Activated CD4-positive, alpha-beta T cell treated with anti-CD3 and anti-CD28 coated beads, Interleukin-2, amount 10 ng/mL, durations not matched to agents 24 days and 14 days (primary cell): ENCODE measurements at regions of chr9 and their contacts with region 1.

Region 1: DNA sequence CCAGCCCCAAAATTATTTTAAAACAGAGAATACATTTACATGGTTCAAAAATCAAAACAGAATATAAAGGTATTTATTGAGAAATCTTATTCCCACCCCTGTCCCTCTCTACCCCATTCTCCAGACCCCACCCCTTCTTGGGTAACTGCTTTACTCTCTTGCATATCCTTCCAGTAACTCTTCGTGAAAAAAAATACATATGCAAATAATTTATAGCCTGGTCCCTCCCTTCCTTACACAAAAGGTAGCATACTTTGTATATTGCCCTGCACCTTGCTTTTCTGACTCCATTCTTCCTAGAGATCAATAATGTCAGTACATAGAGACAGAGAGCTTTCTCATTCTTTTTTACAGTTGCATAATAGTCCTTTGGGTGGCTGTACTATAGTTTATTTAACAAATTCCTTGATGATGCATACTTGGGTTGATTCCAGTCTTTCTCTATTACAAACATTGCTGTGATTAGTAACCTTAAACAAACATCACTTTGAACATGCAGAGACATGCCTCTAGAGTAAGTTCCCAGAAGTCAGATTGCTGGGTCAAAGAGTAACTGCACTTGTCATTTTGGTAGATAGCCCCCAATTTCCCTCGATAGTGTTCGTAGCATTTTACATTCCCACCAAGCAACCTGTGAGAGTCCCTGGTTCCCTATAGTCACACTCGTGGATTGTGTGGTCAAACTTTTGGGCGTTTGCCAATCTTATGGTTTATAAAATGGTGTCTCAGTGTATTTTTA is 47.8 kb downstream of the STOM start:
- DNase-seq: no peak
- H3K4me3 Mint-ChIP-seq: no peak overlapping the region
- H3K27ac Mint-ChIP-seq: no peak overlapping the region
- H3K4me1 Mint-ChIP-seq: peaks cover 24% of the 10 kb centered on the region
- H3K27me3 Mint-ChIP-seq: no peaks in the 10 kb centered on the region

Region 2: DNA sequence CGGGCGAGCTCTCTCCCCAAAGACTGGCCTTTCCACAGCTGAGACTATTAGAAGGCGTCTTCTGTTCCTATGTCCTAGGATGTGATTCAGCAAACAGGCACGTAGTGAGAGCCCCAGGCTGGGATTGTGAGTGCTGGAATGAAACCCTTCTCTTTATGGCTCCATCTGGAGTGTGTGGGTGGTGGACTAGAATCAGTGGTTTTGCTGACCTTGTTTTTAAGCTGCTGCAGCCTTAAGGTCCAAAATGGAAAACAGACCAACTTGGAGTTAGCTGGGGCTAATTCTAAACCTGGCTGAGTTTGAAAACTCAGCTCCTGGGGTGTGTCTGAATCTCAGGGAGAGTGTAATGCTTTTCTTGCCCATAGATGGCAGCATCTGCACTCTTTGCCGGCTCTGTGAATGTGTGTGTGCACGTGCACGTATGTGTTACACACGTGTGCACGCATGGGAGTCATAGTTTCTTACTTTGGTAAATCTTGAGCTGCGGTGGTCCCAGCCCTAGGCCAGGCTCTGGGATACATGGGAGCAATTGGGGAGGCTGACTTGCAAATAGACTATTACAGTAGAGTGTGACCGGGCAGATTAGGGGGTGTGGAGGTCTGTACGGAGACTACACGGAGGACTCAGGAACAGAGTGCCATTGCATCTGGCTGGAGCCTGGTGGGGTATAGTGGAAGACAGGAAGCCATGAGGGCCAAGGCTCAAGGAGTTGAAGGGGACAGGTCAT is 43.5 kb before region 1 on chr9:
- intact Hi-C with region 1: loop called (anchors 2 kb)
- DNase-seq: peak; percentile 82
- H3K4me3 Mint-ChIP-seq: no peak overlapping the region
- H3K27ac Mint-ChIP-seq: peak overlapping the region; percentile 8
- H3K4me1 Mint-ChIP-seq: peaks cover 14% of the 10 kb centered on the region
- H3K27me3 Mint-ChIP-seq: peaks cover 2% of the 10 kb centered on the region

Region 3: DNA sequence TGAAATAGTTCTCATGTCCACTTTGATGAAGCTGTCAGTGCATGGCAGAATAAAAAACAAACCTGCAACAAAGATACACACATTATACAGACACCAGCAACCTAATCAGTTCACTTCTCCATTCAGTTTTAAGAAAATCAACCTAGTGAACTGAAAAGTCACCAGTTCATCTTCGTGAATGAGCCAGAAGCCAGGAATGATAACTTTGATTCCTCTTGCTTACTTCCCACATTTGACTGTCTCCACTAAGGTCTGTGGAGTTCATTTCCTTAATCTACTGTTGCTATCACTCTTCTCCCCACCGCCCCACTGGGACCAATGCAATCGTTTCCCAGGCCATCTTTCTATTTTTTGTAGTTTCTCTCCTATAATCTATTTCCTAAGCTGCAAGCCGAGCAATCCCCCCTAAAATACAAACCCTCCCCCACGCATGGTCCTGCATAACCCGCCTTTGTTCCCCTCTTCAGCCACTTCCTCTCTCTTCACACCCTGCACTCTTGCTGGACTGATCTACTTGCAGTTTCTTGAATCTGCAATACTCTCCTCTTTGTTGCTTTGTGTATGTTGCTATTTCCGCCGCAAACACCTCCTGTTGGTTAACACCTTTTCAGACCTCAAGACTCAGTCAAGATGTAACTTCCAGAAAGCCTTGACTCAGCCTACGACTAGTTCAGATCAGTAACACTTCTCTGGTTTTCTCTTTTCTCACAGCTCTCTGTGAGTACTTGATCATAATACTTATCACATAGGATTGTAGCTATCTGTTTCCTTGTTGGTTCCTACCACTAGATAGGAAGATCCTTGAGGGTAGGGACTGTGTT is 31.2 kb after region 1 on chr9:
- intact Hi-C with region 1: loop called (anchors 2 kb)
- DNase-seq: peak; percentile 89
- H3K4me3 Mint-ChIP-seq: peak overlapping the region; percentile 69
- H3K27ac Mint-ChIP-seq: peak overlapping the region; percentile 89
- H3K4me1 Mint-ChIP-seq: peaks cover 50% of the 10 kb centered on the region
- H3K27me3 Mint-ChIP-seq: no peaks in the 10 kb centered on the region

Region 4: GRCh38 chr9:121369595-121370265 is 47.5 kb after region 1 on chr9 and contains the start of gene STOM:
- intact Hi-C with region 1: loop called (anchors 1 kb)
- DNase-seq: no peak
- H3K4me3 Mint-ChIP-seq: peak within 1 kb of the TSS; percentile 84
- H3K27ac Mint-ChIP-seq: peak within 1 kb of the TSS; percentile 92
- H3K4me1 Mint-ChIP-seq: peaks cover 43% of the 10 kb centered on the region
- H3K27me3 Mint-ChIP-seq: no peaks in the 10 kb centered on the region
- total RNA-seq, gene STOM: 48.3 and 50.3 TPM in 2 replicates

Region 5: GRCh38 chr9:121376214-121376830 is 54.1 kb after region 1 on chr9:
- intact Hi-C with region 1: loop called (anchors 1 kb)
- DNase-seq: no peak
- H3K4me3 Mint-ChIP-seq: no peak overlapping the region
- H3K27ac Mint-ChIP-seq: no peak overlapping the region
- H3K4me1 Mint-ChIP-seq: peaks cover 11% of the 10 kb centered on the region
- H3K27me3 Mint-ChIP-seq: peaks cover 6% of the 10 kb centered on the region

Region 6: DNA sequence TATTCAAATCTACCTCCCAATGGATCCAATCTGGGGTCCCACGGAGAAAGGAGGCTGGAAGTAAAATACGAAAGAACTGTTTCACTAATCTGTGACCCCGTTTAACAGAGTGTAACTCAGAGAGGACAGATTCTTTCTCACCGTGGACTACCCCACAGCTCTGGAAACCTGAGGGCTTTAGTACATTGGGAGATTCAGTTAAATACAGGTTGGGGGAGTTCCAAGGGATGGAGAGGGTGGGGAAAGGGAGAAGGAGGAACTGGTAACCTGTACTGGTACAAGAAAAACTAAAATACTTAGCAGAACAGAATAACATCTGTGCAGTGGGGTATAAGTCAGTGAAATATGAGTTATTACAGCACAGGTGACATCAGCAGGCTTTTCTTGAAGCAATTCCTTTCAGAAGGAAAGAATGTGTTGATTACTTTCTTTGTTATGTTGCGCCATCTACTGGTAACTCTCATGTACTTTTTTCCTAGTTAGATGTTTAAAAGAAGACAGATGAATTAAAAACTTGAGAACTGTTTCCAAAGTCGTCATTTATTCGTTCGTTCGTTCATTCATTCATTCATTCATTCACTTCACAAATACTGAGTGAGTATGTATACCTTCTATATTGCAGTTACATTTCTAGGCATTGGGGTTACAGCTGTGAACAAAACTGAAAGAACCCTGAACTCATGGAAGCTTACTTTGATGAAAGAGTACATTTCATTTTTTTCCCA is 77.8 kb after region 1 on chr9:
- intact Hi-C with region 1: loop called (anchors 1 kb)
- DNase-seq: peak; percentile 68
- H3K4me3 Mint-ChIP-seq: no peak overlapping the region
- H3K27ac Mint-ChIP-seq: no peak overlapping the region
- H3K4me1 Mint-ChIP-seq: no peaks in the 10 kb centered on the region
- H3K27me3 Mint-ChIP-seq: peaks cover 18% of the 10 kb centered on the region